Ascending aorta (tissue), 2 donors: ENCODE measurements at regions of chr19 and their contacts with region 1.

Region 1: GRCh38 chr19:40576585-40577451 is at the start of gene SHKBP1:
- DNase-seq: peak; percentile 80 to 96
- H3K4me3 ChIP-seq: peak within 1 kb of the TSS; percentile 75 to 84
- H3K27ac ChIP-seq: peak within 1 kb of the TSS; percentile 66
- H3K4me1 ChIP-seq: peaks cover 0 to 11% of the 10 kb centered on the region in 2 donors
- H3K27me3 ChIP-seq: no peaks in the 10 kb centered on the region
- CTCF ChIP-seq: no peak
- total RNA-seq, gene SHKBP1: 192 TPM

Region 2: DNA sequence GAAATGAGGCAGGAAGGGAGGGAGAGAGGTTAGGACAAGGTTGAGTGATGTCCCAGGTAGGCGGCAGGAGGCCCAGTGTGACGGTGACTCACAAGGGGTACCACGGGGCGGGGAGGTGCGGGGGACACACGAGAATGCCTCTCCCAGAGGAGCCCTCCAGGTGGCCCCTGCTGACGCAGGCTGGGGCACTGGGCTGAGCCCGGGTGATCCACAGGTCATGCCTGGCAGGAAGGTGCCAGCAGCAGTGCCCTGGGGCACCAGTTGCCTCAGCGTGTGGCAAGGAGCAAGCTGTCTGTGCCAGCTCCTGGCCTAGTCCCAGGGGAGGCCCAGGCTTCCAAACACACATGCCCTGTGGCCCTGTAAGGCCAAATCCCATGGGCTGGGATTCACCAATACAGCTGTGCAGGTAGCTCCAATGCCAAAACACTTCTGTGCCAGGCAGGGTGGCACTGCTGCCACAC is 319.7 kb before region 1 on chr19:
- intact Hi-C with region 1: no loop called
- DNase-seq: no peak
- H3K4me3 ChIP-seq: no peak overlapping the region
- H3K27ac ChIP-seq: no peak overlapping the region
- H3K4me1 ChIP-seq: no peaks in the 10 kb centered on the region
- H3K27me3 ChIP-seq: no peaks in the 10 kb centered on the region
- CTCF ChIP-seq: no peak

Region 3: GRCh38 chr19:40486017-40486416 is 90.8 kb before region 1 on chr19:
- intact Hi-C with region 1: no loop called
- DNase-seq: no peak
- H3K4me3 ChIP-seq: no peak overlapping the region
- H3K27ac ChIP-seq: no peak overlapping the region
- H3K4me1 ChIP-seq: no peaks in the 10 kb centered on the region
- H3K27me3 ChIP-seq: no peaks in the 10 kb centered on the region
- CTCF ChIP-seq: no peak

Region 4: DNA sequence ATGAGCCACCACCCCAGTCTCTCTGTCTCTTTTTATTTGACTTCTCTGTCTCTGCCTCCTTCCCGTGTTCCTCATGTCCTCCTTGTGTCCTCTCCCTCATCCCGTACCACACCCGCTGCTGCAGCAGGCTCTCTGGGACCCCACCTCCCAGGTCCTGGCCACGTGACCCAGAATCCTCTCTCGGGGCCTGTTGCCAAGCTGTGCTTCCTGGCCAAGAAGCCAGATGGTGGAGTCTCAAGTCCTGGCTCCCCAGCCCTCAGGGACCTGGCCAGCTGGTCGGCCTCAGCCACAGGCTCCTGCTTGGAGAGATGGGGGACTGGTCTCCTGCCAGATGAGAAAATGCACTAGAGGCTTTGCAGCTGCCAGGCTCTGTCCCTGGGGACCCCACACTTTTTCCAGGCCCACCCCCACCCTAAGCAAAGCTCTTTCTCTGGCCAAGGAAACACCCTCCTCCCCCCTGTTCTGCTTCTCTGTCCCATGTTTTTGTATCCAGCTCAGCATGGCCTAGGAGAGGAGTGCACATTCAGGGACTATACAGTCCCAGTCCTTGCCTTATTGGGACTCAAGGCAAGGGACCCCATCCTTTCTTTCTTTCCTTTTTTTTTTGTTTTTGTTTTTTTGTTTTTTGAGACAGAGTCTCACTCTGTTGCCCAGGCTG is 34.5 kb before region 1 on chr19:
- intact Hi-C with region 1: loop called (anchors 5 kb)
- DNase-seq: peak in 1 of 2 donors; percentile 76
- H3K4me3 ChIP-seq: no peak overlapping the region
- H3K27ac ChIP-seq: peak overlapping the region; percentile 63 to 72
- H3K4me1 ChIP-seq: peaks cover 0 to 7% of the 10 kb centered on the region in 2 donors
- H3K27me3 ChIP-seq: no peaks in the 10 kb centered on the region
- CTCF ChIP-seq: no peak

Region 5: GRCh38 chr19:40613640-40614303 is 37.0 kb after region 1 on chr19:
- intact Hi-C with region 1: no loop called
- DNase-seq: peak in 1 of 2 donors; percentile 80
- H3K4me3 ChIP-seq: peak overlapping the region; percentile 27 to 59
- H3K27ac ChIP-seq: peak overlapping the region; percentile 44 to 57
- H3K4me1 ChIP-seq: peaks cover 3 to 16% of the 10 kb centered on the region in 2 donors
- H3K27me3 ChIP-seq: no peaks in the 10 kb centered on the region
- CTCF ChIP-seq: no peak